Calu3 (cell line): ENCODE measurements at regions of chr18 and their contacts with region 1.

Region 1: GRCh38 chr18:9334329-9334972 is at the start of gene TWSG1:
- DNase-seq: peak; percentile 95
- H3K4me3 Mint-ChIP-seq: peak within 1 kb of the TSS; percentile 87
- H3K27ac Mint-ChIP-seq: no peak within 1 kb of the TSS
- H3K4me1 Mint-ChIP-seq: peaks cover 8% of the 10 kb centered on the region
- H3K27me3 Mint-ChIP-seq: no peaks in the 10 kb centered on the region
- CTCF ChIP-seq: peak; percentile 44
- total RNA-seq, gene TWSG1: 24.8 and 29.1 TPM in 2 replicates

Region 2: GRCh38 chr18:9079818-9080528 is 254.5 kb before region 1 on chr18:
- CTCF ChIA-PET with region 1: no interaction called
- intact Hi-C with region 1: loop called (anchors 10 kb)
- DNase-seq: no peak
- H3K4me3 Mint-ChIP-seq: no peak overlapping the region
- H3K27ac Mint-ChIP-seq: no peak overlapping the region
- H3K4me1 Mint-ChIP-seq: no peaks in the 10 kb centered on the region
- H3K27me3 Mint-ChIP-seq: no peaks in the 10 kb centered on the region
- CTCF ChIP-seq: no peak

Region 3: DNA sequence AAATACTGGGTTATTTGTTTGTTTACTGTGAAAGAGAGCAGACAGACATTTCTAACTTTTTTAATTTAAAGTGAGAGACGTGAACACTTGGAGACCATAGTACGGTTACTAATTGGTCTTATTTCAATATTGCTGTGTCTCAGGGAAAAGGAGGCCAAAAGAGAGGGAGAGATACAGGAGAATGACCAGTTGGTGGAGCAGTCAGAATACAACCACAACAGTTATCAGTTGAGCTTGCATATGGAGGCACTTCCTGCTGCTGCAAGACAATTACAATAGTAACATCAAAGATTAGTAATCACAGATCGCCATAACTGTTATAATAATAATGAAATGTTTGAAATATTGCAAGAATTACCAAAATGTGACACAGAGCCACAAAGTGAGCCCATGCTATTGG is 58.3 kb after region 1 on chr18:
- CTCF ChIA-PET with region 1: interaction called, 12 read pairs
- intact Hi-C with region 1: no loop called
- DNase-seq: no peak
- H3K4me3 Mint-ChIP-seq: no peak overlapping the region
- H3K27ac Mint-ChIP-seq: no peak overlapping the region
- H3K4me1 Mint-ChIP-seq: no peaks in the 10 kb centered on the region
- H3K27me3 Mint-ChIP-seq: no peaks in the 10 kb centered on the region
- CTCF ChIP-seq: no peak

Region 4: GRCh38 chr18:9495911-9496705 is 161.7 kb after region 1 on chr18:
- CTCF ChIA-PET with region 1: interaction called, 10 read pairs
- intact Hi-C with region 1: no loop called
- DNase-seq: no peak
- H3K4me3 Mint-ChIP-seq: no peak overlapping the region
- H3K27ac Mint-ChIP-seq: no peak overlapping the region
- H3K4me1 Mint-ChIP-seq: peaks cover 35% of the 10 kb centered on the region
- H3K27me3 Mint-ChIP-seq: no peaks in the 10 kb centered on the region
- CTCF ChIP-seq: no peak